ENCODE measurements at regions of chr15 and their contacts with region 1.

Region 1: GRCh38 chr15:68924866-68925560 is 5.3 kb upstream of the SPESP1 start:
- DNase-seq: peak; percentile 80 to 89
- ATAC-seq: peak; percentile 81
- H3K4me3 ChIP-seq: no peak overlapping the region
- H3K27ac ChIP-seq: no peak overlapping the region
- H3K4me1 ChIP-seq: no peaks in the 10 kb centered on the region
- H3K27me3 ChIP-seq: no peaks in the 10 kb centered on the region

Region 2: DNA sequence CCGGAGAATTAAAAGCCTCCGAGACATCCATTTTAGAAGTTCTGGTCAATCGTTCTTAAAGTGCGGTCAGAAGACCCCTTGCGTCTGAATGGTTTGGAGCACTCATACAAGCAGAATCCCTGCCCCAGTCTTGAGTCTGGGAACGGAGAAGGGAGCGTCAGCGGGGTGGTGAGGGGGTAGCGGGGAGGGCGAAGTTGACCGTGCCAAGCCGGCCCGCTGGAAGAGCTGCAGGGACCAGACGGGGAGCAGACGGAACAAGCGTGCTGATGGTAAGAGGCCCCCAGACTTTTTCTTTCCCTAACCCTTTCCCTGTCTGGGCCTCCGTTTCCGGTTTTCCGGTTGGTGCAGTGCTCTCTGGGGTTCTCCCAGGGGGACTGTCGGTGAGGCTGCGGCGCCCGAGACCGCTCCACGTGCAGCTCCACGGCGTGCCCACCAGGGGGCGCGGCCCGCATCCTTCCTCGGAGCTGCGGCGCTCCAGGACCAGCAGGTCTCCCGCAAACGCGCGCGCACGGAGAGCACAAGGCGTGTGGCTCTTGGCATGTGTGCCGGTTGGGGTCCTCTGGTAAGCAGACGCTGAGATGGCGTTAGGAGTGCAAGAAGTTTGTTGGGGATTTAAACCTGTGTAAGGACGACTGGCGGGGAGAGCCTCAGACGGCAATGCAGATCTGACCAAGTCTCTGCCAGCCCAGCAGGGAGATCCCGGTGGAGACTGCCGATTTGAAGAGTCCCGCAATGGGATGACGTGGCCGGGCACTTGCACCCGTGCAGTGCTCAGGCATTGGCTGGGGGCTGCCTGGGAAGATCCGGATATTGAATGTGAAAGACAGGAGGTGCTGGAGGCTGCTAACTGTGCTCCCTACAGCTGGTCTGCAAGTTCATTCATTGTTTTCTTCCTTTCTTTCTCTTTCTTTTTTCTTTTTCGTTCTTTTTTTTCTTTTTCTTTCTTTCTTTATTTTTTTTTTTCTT is 365.4 kb before region 1 on chr15:
- intact Hi-C with region 1: loop called in 1 of 2 experiments (anchors 5 kb)
- DNase-seq: peak; percentile 83 to 95
- ATAC-seq: peak; percentile 95
- H3K4me3 ChIP-seq: peak overlapping the region; percentile 15 to 27
- H3K27ac ChIP-seq: no peak overlapping the region
- H3K4me1 ChIP-seq: no peaks in the 10 kb centered on the region
- H3K27me3 ChIP-seq: no peaks in the 10 kb centered on the region

Region 3: GRCh38 chr15:68983961-68984481 is 59.0 kb after region 1 on chr15:
- intact Hi-C with region 1: no loop called
- DNase-seq: no peak
- ATAC-seq: no peak
- H3K4me3 ChIP-seq: no peak overlapping the region
- H3K27ac ChIP-seq: no peak overlapping the region
- H3K4me1 ChIP-seq: no peaks in the 10 kb centered on the region
- H3K27me3 ChIP-seq: peaks cover 0 to 4% of the 10 kb centered on the region in 2 donors